ENCODE measurements at regions of chr16 and their contacts with region 1.

Region 1: GRCh38 chr16:85610508-85611332 is 2.4 kb upstream of the GSE1 start:
- DNase-seq: peak; percentile 94
- ATAC-seq: peak; percentile 67
- H3K4me3 Mint-ChIP-seq: peak overlapping the region; percentile 63
- H3K27ac Mint-ChIP-seq: peak overlapping the region; percentile 72
- H3K4me1 Mint-ChIP-seq: peaks cover 48% of the 10 kb centered on the region
- H3K27me3 Mint-ChIP-seq: no peaks in the 10 kb centered on the region
- CTCF ChIP-seq: peak; percentile 98

Region 2: DNA sequence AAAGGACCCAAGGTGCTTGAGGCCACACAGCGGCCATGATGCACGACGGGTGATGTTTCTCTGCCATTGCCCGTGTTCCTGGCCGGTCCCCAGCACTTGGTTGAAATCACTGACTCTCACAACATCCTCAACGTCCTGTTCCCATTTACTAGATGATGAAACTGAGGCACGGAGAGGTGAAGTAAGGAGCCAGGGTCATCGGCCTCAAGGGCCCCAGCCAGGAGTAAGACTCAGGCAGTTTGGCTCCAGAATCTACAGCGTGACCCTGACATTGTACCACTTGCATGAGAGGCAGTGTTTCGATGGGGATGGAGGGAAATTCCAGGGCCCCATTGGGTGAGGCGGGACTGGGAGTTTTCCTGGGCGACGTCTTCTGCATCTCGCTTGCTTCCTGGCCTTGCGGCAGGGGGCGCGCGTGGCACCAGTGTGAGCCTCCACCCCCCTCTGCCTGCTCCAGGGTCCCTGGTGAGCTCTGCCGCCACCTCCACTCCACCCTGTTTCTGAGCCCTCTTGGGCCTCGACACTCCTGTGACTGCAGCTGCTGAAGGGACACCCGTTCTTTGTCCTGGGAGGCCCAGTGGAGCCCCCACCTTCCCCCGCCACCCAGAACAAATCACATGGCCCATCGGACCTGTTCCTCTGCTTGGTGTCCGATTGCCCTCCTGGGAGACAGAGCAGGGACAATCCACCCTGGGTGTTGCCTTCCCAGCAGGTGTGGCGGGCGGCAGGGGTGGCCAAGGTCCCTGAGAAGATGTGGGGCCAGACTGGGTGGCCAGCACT is 130.6 kb before region 1 on chr16:
- CTCF ChIA-PET with region 1: interaction called, 11 read pairs
- POLR2A ChIA-PET with region 1: no interaction called
- intact Hi-C with region 1: no loop called
- DNase-seq: peak; percentile 38
- ATAC-seq: no peak
- H3K4me3 Mint-ChIP-seq: no peak overlapping the region
- H3K27ac Mint-ChIP-seq: no peak overlapping the region
- H3K4me1 Mint-ChIP-seq: no peaks in the 10 kb centered on the region
- H3K27me3 Mint-ChIP-seq: no peaks in the 10 kb centered on the region
- CTCF ChIP-seq: no peak

Region 3: DNA sequence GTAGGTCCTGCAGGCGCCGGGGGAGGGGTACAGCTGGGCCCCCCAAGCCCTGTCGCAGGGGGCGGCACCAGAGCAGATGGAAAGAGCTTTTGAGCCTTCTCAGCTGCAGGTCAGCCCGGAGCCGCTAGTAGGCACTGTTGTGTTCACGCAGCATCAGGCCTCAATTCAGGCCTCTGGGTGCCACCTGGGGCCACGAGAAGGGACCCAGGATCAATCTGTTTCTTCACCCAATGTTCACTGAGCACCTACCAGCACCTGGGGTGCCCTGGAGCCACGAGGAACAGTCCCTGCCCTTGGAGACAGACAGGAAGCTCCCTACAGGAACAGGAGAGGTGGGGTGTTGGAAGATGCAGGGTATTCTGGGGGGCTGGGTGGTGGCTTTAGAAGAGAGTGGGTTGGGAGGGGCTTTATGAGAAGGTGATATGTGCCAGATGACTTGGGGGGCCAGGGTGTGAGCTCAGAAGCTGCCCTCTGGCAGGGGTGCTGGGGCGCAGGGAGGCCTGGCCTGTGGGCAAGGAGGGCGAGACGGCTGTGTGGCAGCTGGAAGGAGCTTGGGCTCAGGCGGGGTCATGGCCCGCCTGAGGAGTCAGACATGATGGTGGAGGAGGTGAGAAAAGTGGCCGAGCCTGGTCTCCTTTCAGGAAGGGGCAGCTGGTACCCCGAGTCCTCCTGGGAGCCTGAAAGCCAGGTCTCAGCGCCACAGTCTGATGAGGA is 119.5 kb before region 1 on chr16:
- CTCF ChIA-PET with region 1: interaction called, 46 read pairs
- POLR2A ChIA-PET with region 1: interaction called, 3 read pairs
- intact Hi-C with region 1: no loop called
- DNase-seq: peak; percentile 72
- ATAC-seq: peak; percentile 88
- H3K4me3 Mint-ChIP-seq: no peak overlapping the region
- H3K27ac Mint-ChIP-seq: no peak overlapping the region
- H3K4me1 Mint-ChIP-seq: peaks cover 19% of the 10 kb centered on the region
- H3K27me3 Mint-ChIP-seq: no peaks in the 10 kb centered on the region
- CTCF ChIP-seq: peak; percentile 76

Region 4: DNA sequence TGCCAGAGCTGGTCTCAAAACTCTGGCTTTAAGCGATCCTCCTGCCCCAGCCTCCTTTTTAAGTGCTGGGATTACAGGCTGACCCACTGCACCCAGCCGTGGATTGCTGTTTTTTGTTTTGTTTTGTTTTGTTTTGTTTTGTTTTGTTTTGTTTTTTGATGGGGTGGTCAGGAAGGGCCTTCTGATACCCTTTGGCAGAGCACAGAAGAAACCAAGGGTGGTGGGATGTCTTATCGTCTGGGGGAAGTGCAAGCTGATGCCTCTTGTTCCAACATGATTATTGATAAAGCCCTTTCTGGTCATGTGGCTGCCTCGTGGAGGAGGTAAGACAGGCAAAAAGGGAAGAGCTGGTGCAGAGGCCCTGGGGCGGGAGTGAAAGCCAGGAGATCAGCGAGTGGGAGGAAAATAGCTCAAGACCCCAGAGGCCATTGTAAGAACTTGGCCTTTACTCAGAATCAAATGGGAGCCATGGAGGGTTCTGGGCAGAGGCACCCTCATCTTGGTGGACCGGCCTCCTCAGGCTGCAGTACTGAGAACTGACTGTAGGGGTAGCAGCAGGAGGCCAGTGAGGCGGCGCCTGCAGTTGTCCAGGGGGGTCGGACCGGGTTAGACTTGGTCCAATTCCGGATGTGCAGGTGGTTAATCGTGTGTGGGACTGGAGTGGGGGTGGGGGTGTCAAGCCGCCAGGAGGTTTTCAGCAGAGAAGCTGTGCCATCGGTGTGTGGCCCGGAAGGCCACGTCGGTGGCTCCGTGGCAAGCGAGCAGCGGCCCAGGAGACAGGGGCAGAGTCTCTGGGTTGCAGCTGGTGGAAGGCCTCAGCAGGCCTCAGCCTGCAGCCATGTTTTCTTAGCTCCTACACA is 82.0 kb before region 1 on chr16:
- CTCF ChIA-PET with region 1: interaction called, 16 read pairs
- POLR2A ChIA-PET with region 1: no interaction called
- intact Hi-C with region 1: no loop called
- DNase-seq: peak; percentile 50
- ATAC-seq: peak; percentile 77
- H3K4me3 Mint-ChIP-seq: no peak overlapping the region
- H3K27ac Mint-ChIP-seq: no peak overlapping the region
- H3K4me1 Mint-ChIP-seq: no peaks in the 10 kb centered on the region
- H3K27me3 Mint-ChIP-seq: no peaks in the 10 kb centered on the region
- CTCF ChIP-seq: peak; percentile 71

Region 5: DNA sequence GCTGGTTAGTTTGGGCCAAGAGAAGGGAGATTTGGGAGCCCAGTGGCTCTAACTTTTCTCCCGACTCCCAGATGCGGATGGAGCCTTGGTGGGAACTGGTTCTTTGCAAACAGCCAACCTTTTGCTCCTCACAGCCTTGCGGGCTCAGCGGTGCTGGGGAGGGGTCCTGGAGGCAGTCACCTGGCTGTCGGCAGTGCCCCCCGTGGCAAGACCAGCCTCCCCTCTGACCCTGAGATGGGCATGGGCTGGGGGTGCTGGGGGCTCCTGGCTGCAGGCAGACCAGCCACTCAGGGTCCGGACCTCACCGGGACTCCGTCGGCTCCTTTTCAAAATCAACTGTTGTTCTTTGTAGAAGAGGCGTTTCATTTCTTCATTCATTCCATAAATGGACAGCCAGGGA is 19.3 kb before region 1 on chr16:
- CTCF ChIA-PET with region 1: no interaction called
- POLR2A ChIA-PET with region 1: no interaction called
- intact Hi-C with region 1: no loop called
- DNase-seq: no peak
- ATAC-seq: no peak
- H3K4me3 Mint-ChIP-seq: no peak overlapping the region
- H3K27ac Mint-ChIP-seq: no peak overlapping the region
- H3K4me1 Mint-ChIP-seq: peaks cover 22% of the 10 kb centered on the region
- H3K27me3 Mint-ChIP-seq: no peaks in the 10 kb centered on the region
- CTCF ChIP-seq: no peak

Measured in activated CD8-positive, alpha-beta T cell treated with anti-CD3 and anti-CD28 coated beads for 36 hours (primary cell).